A549 (cell line): ENCODE measurements at regions of chr10 and their contacts with region 1.

Region 1: GRCh38 chr10:43436400-43437140 is at the start of gene ZNF487:
- DNase-seq: peak; percentile 82 to 93
- ATAC-seq: peak; percentile 97
- H3K4me3 ChIP-seq: peak within 1 kb of the TSS; percentile 83
- H3K27ac ChIP-seq: peak within 1 kb of the TSS; percentile 92 to 100
- H3K4me1 ChIP-seq: 0 out of 3 replicates have a peak, but pooled peaks cover 3% of the 10 kb centered on the region
- CTCF ChIP-seq: peak; percentile 18; the same call in 2 of the 3 replicates
- EP300 ChIP-seq: no peak
- POLR2A ChIP-seq: peak; percentile 71
- RAD21 ChIP-seq: peak in 1 of 2 experiments; percentile 11; a peak in 2 of 5 replicates
- polyA plus RNA-seq, gene ZNF487: 7.2 and 9.4 TPM in 2 replicates

Region 2: GRCh38 chr10:43407576-43408330 is 28.8 kb before region 1 on chr10:
- CTCF ChIA-PET with region 1: interaction called, 5 read pairs
- POLR2A ChIA-PET with region 1: interaction called, 30 read pairs
- DNase-seq: peak; percentile 78 to 94
- ATAC-seq: peak; percentile 60 to 67
- H3K4me3 ChIP-seq: peak overlapping the region; percentile 96
- H3K27ac ChIP-seq: peak overlapping the region; percentile 95
- H3K4me1 ChIP-seq: peaks cover 41% of the 10 kb centered on the region
- CTCF ChIP-seq: peak; percentile 27; the same call in 2 of the 3 replicates
- EP300 ChIP-seq: no peak
- POLR2A ChIP-seq: peak; percentile 70
- RAD21 ChIP-seq: no peak

Region 3: DNA sequence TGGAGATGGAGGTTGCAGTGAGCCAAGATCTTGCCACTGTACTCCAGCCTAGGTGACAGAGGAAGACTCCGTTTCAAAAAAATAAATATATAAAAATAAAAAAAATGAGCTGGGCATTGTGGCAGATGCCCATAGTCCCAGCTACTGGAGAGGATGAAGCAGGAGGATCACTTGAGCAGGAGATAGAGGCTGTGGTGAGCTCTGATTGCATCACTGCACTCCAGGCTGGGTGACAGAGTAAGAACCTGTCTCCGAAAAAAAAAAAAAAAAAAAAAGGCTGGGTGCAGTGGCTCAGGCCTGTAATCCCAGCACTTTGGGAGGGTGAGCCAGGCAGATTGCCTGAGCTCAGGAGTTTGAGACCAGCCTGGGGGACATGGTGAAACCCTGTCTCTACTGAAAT is 12.2 kb after region 1 on chr10:
- CTCF ChIA-PET with region 1: interaction called, 3 read pairs
- POLR2A ChIA-PET with region 1: interaction called, 10 read pairs
- DNase-seq: no peak
- ATAC-seq: no peak
- H3K4me3 ChIP-seq: no peak overlapping the region
- H3K27ac ChIP-seq: no peak overlapping the region
- H3K4me1 ChIP-seq: peaks cover 8% of the 10 kb centered on the region; the same call in 1 of the 3 replicates
- CTCF ChIP-seq: no peak
- EP300 ChIP-seq: no peak
- POLR2A ChIP-seq: no peak
- RAD21 ChIP-seq: no peak

Region 4: GRCh38 chr10:43461950-43462349 is 25.4 kb after region 1 on chr10:
- CTCF ChIA-PET with region 1: no interaction called
- POLR2A ChIA-PET with region 1: interaction called, 13 read pairs
- DNase-seq: peak; percentile 55 to 86
- ATAC-seq: peak; percentile 89 to 91
- H3K4me3 ChIP-seq: no peak overlapping the region
- H3K27ac ChIP-seq: no peak overlapping the region
- H3K4me1 ChIP-seq: peaks cover 5% of the 10 kb centered on the region; the same call in 1 of the 3 replicates
- CTCF ChIP-seq: peak; percentile 89
- EP300 ChIP-seq: no peak
- POLR2A ChIP-seq: no peak
- RAD21 ChIP-seq: peak; percentile 80 to 81

Region 5: DNA sequence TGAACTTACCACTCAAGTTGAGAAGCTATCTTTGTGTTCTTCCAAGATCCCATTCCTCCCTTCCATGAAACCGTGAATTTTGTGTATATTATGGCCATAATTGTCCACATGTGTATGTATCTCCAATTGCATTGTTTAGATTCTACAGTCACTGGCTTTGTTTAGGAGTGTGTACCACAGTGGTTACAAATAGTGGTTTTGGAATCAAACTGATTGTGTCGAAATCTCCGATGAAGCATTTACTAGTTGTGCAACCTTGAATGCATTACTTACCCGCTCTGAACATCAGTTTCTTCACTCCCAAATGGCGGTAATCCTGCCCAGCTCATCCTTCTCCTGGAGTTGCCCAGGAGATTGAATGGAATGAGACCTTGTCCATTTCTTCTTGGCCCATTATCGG is 357.1 kb after region 1 on chr10:
- CTCF ChIA-PET with region 1: no interaction called
- POLR2A ChIA-PET with region 1: no interaction called
- DNase-seq: no peak
- ATAC-seq: no peak
- H3K4me3 ChIP-seq: no peak overlapping the region
- H3K27ac ChIP-seq: no peak overlapping the region
- H3K4me1 ChIP-seq: no peaks in the 10 kb centered on the region
- CTCF ChIP-seq: no peak
- EP300 ChIP-seq: no peak
- POLR2A ChIP-seq: no peak
- RAD21 ChIP-seq: no peak